Activated T-helper 2 cell treated with anti-CD3 and anti-CD28 coated beads, Interferon-gamma antibody, Interleukin-2, Interleukin-4, amounts not matched to agents 10 μg/mL and 5 μg/mL and 100 μg/mL, durations not matched to agents 14 hours and 24 hours and 36 hours (primary cell): ENCODE measurements at regions of chr9 and their contacts with region 1.

Region 1: DNA sequence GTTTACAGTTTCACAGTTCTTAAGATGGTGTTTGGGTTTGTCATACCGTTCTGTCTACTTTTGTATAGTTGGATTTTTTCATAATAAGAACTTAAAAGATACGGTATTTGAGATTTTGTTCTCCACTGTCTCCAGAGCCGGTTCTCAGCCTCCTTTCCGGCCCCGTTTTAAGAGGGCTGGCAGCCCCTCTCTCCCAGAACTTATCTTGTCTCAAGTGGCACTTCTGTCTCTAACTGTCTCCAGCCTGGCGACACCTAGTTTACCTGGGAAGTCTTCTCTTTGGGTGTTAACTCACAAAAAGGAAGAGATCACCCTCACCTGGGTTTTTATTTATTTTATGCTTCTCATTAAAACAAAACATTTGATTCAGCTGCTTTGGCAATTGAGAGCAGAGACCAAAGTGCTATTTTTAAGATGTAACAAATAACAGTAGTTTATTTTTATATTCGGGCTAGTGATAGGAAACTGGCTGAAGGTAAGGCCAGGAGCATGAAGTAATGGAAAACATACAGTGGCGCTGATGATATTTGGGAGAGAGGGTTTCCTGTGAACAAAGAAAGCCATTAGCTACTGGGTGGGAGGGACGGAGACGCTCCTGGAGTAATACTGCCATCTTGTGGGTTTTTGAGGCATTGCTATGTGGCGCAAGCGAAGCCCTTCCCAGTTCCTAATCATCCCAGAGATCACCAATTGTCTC is 48.3 kb downstream of the ACER2 start:
- DNase-seq: peak; percentile 58
- H3K4me3 Mint-ChIP-seq: peak overlapping the region; percentile 63
- H3K27ac Mint-ChIP-seq: no peak overlapping the region
- H3K4me1 Mint-ChIP-seq: peaks cover 10% of the 10 kb centered on the region
- H3K27me3 Mint-ChIP-seq: peaks cover 1% of the 10 kb centered on the region

Region 2: GRCh38 chr9:18255158-18255629 is 1202.0 kb before region 1 on chr9:
- intact Hi-C with region 1: loop called (anchors 5 kb)
- DNase-seq: peak; percentile 48
- H3K4me3 Mint-ChIP-seq: no peak overlapping the region
- H3K27ac Mint-ChIP-seq: no peak overlapping the region
- H3K4me1 Mint-ChIP-seq: peaks cover 7% of the 10 kb centered on the region
- H3K27me3 Mint-ChIP-seq: peaks cover 6% of the 10 kb centered on the region

Region 3: GRCh38 chr9:19048966-19049916 is 407.9 kb before region 1 on chr9 and contains the start of gene RRAGA:
- intact Hi-C with region 1: loop called (anchors 1 kb)
- DNase-seq: peak; percentile 94
- H3K4me3 Mint-ChIP-seq: peak within 1 kb of the TSS; percentile 96
- H3K27ac Mint-ChIP-seq: peak within 1 kb of the TSS; percentile 95
- H3K4me1 Mint-ChIP-seq: peaks cover 39% of the 10 kb centered on the region
- H3K27me3 Mint-ChIP-seq: no peaks in the 10 kb centered on the region
- total RNA-seq, gene RRAGA: 60.8 and 64.6 TPM in 2 replicates

Region 4: GRCh38 chr9:19174127-19174912 is 282.8 kb before region 1 on chr9:
- intact Hi-C with region 1: loop called (anchors 2 kb)
- DNase-seq: peak; percentile 21
- H3K4me3 Mint-ChIP-seq: peak overlapping the region; percentile 9
- H3K27ac Mint-ChIP-seq: peak overlapping the region; percentile 46
- H3K4me1 Mint-ChIP-seq: peaks cover 29% of the 10 kb centered on the region
- H3K27me3 Mint-ChIP-seq: no peaks in the 10 kb centered on the region

Region 5: DNA sequence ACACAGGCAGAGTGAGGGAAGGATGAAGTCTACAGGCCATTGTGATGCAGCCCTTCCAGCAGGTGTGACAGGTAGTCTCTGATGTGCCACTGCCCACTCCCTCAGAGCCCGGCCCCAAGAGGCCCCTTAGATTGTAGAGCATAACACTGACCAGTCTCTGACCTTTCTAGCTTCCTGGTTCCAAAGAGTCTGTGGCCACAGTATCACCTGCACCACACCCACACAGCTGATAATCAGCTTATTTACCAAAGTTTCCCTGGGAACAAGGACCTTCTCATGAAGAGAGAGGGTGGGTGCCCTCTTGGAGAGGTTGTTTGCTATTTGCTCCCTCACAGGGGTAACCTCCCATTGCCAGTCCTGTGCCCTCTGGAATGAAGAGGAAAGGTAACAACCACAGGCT is 59.3 kb before region 1 on chr9:
- intact Hi-C with region 1: no loop called
- DNase-seq: no peak
- H3K4me3 Mint-ChIP-seq: no peak overlapping the region
- H3K27ac Mint-ChIP-seq: no peak overlapping the region
- H3K4me1 Mint-ChIP-seq: no peaks in the 10 kb centered on the region
- H3K27me3 Mint-ChIP-seq: peaks cover 9% of the 10 kb centered on the region

Region 6: DNA sequence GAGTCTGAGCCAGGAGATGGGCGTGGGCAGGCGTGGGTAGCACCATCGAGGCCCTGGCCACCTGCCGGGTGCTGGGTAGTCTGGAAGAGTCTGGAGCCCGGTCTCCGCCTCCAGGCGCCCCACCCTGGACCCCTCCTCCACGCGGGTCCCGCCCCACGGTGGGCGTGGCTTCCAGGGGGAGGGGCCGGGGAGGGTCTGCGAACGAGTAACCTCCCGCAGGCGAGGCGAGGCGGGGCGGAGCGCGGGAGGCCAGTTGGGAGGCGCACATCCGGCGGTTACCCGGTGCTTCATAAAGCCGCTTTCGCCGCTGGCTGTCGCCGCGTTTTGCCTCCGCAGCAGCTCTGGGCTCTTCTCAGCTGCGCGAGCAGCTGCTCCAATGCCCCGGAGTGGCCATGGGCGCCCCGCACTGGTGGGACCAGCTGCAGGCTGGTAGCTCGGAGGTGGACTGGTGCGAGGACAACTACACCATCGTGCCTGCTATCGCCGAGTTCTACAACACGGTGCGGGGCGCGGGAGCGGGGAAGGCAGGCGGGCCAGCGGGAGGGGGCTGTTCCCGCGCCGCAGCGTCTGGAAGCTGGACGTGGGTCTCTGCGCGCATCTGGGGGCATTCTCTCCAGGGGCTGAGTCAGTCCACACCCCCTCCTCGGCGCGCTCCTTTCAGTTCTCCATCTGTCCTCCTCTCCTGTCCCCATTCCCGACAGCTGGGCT is 48.3 kb before region 1 on chr9 and contains the start of gene ACER2:
- intact Hi-C with region 1: loop called (anchors 2 kb)
- DNase-seq: peak; percentile 93
- H3K4me3 Mint-ChIP-seq: peak within 1 kb of the TSS; percentile 96
- H3K27ac Mint-ChIP-seq: peak within 1 kb of the TSS; percentile 50
- H3K4me1 Mint-ChIP-seq: peaks cover 14% of the 10 kb centered on the region
- H3K27me3 Mint-ChIP-seq: peaks cover 3% of the 10 kb centered on the region
- total RNA-seq, gene ACER2: 1.0 and 1.3 TPM in 2 replicates

Region 7: GRCh38 chr9:19424176-19424779 is 32.9 kb before region 1 on chr9:
- intact Hi-C with region 1: no loop called
- DNase-seq: no peak
- H3K4me3 Mint-ChIP-seq: no peak overlapping the region
- H3K27ac Mint-ChIP-seq: no peak overlapping the region
- H3K4me1 Mint-ChIP-seq: no peaks in the 10 kb centered on the region
- H3K27me3 Mint-ChIP-seq: no peaks in the 10 kb centered on the region